ENCODE measurements at regions of chr1 and their contacts with region 1.

Region 1: DNA sequence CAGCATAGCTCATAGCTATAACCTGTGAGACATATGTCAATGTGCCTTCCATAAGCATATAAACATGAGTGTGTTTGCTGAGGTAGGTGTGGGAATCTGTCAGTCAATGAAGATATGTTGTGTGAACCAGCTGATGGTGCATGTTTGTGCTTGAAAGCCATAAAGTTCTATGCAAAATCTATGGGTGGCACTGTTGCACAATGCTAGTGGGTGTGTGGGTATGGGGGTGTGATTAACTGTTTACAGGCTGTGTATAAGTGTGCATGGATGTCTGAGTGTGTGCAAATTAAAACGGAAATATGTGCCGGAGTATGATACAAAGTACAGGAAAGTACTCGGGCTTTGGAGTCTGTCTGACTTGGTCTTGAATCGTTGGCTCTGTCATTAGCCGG is 1.0 kb upstream of the ATP2B4 start:
- DNase-seq: peak in 1 of 2 donors; percentile 60
- H3K4me3 ChIP-seq: peak overlapping the region; percentile 61 to 63
- H3K27ac ChIP-seq: peak overlapping the region; percentile 94 to 98
- H3K4me1 ChIP-seq: peaks cover 0 to 3% of the 10 kb centered on the region in 2 donors
- H3K27me3 ChIP-seq: no peaks in the 10 kb centered on the region
- CTCF ChIP-seq: peak; percentile 21 to 61 (median 35)
- POLR2A ChIP-seq: no peak

Region 2: DNA sequence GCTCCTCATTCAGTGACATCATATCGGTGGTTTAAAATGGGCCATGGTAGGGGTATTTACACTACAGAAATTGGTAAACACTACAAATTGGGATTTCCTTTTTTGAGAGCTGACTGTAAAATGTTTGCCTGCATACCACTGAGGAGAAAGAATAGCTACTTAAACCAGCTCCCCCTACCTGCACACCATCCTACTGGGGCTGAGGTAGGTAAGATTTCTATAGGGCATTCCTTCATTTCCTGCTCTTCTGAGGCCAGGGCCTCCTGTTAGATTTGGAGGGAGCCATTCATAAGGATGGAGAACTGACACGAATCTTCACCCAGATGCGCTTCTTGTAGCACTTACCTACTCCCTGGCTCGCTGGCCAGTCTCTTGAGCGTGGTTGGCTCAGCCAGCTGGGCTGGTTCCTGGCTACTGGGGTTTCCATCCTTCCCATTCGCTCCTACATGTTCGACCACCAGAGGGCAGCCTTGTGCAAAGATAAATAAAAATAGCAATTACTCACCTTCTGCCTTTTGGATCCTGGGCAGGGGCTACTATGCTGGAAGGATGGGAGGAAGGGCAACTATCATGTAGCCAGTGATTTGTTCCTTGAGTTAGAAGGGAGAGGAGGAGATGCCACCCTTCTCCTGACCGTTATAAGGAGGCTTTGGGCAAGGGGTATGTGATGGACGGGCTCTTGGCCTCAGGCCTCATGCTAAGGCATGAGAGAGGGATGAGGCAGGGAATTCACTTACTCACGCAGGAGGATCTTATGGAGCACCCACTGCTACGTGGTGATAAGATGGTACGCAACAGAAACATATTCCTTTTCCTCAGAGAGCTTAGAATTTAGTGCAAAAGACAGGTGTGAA is 121.0 kb before region 1 on chr1:
- intact Hi-C with region 1: loop called (anchors 5 kb)
- DNase-seq: peak; percentile 87 to 92
- H3K4me3 ChIP-seq: no peak overlapping the region
- H3K27ac ChIP-seq: peak overlapping the region; percentile 83 to 85
- H3K4me1 ChIP-seq: peaks cover 0 to 16% of the 10 kb centered on the region in 2 donors
- H3K27me3 ChIP-seq: no peaks in the 10 kb centered on the region
- CTCF ChIP-seq: peak; percentile 82 to 90 (median 86)
- POLR2A ChIP-seq: no peak

Region 3: DNA sequence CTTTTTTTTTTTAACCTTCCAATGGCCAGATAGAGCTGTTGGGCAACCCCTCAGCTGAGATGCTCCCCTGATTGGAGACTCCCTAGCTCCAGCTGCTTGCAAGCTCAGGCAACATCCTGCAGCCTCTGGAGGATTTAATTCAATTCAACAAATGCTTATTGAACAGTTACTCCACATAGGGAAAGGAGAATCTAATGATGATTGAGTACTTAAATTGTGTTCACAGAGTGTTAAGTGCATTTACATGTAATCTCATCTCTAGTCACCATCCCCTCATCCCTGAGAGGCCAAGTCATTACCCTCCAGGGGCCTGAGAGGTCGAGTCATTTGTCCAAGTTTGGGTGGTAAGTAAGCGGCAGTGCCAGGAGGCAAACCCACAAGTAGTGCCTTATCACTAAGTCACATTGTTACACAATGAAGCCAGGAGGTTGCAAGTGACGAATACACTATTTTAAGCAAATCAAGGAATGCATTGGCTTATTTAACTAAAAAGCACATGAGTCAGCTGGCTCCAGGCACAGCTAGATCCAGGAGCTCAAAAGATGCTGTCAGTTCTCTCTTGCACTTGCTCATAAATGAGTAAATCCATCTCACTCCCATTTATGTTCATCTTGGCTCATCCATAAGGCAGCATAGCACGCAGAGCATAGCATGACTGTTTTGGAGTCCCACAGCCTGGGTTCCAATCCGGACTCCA is 67.4 kb before region 1 on chr1:
- intact Hi-C with region 1: loop called (anchors 5 kb)
- DNase-seq: peak; percentile 66 to 88
- H3K4me3 ChIP-seq: no peak overlapping the region
- H3K27ac ChIP-seq: peak overlapping the region; percentile 94
- H3K4me1 ChIP-seq: peaks cover 17 to 20% of the 10 kb centered on the region in 2 donors
- H3K27me3 ChIP-seq: no peaks in the 10 kb centered on the region
- CTCF ChIP-seq: no peak
- POLR2A ChIP-seq: no peak

Region 4: GRCh38 chr1:203692565-203693470 is 67.2 kb after region 1 on chr1:
- intact Hi-C with region 1: loop called (anchors 5 kb)
- DNase-seq: peak; percentile 90 to 92
- H3K4me3 ChIP-seq: no peak overlapping the region
- H3K27ac ChIP-seq: peak overlapping the region; percentile 92 to 97
- H3K4me1 ChIP-seq: peaks cover 20 to 39% of the 10 kb centered on the region in 2 donors
- H3K27me3 ChIP-seq: no peaks in the 10 kb centered on the region
- CTCF ChIP-seq: peak in 2 of 4 experiments; percentile 28 to 32
- POLR2A ChIP-seq: peak in 1 of 2 donors; percentile 39

Measured in uterus (tissue), 4 donors.